ENCODE measurements at regions of chr5 and their contacts with region 1.

Region 1: GRCh38 chr5:124453221-124454051 is 293.0 kb downstream of the ZNF608 start:
- DNase-seq: peak; percentile 83
- ATAC-seq: peak; percentile 98
- H3K4me3 ChIP-seq: no peak overlapping the region
- H3K27ac ChIP-seq: peak overlapping the region; percentile 40; the same call in 1 of the 2 replicates
- H3K4me1 ChIP-seq: peaks cover 19% of the 10 kb centered on the region
- H3K27me3 ChIP-seq: no peaks in the 10 kb centered on the region
- CTCF ChIP-seq: no peak
- EP300 ChIP-seq: no peak
- POLR2A ChIP-seq: no peak
- RAD21 ChIP-seq: no peak

Region 2: GRCh38 chr5:124524552-124525232 is 71.3 kb after region 1 on chr5:
- CTCF ChIA-PET with region 1: interaction called, 3 read pairs
- POLR2A ChIA-PET with region 1: no interaction called
- RAD21 ChIA-PET with region 1: no interaction called
- SMC1A ChIA-PET with region 1: no interaction called
- in situ Hi-C with region 1: no loop called
- intact Hi-C with region 1: loop called (anchors 5 kb)
- DNase-seq: peak; percentile 35
- ATAC-seq: peak; percentile 86
- H3K4me3 ChIP-seq: no peak overlapping the region
- H3K27ac ChIP-seq: no peak overlapping the region
- H3K4me1 ChIP-seq: peaks cover 20% of the 10 kb centered on the region
- H3K27me3 ChIP-seq: 0 out of 4 replicates have a peak, but pooled peaks cover 0 to 3% of the 10 kb centered on the region in 2 experiments
- CTCF ChIP-seq: peak; percentile 26 to 50 (median 30); a peak in 5 of 6 replicates
- EP300 ChIP-seq: no peak
- POLR2A ChIP-seq: no peak
- RAD21 ChIP-seq: peak; percentile 67

Region 3: GRCh38 chr5:124725040-124725434 is 271.6 kb after region 1 on chr5:
- CTCF ChIA-PET with region 1: no interaction called
- POLR2A ChIA-PET with region 1: no interaction called
- RAD21 ChIA-PET with region 1: no interaction called
- SMC1A ChIA-PET with region 1: no interaction called
- in situ Hi-C with region 1: no loop called
- intact Hi-C with region 1: loop called (anchors 5 kb)
- DNase-seq: no peak
- ATAC-seq: peak; percentile 78
- H3K4me3 ChIP-seq: peak overlapping the region; percentile 46; the same call in 1 of the 2 replicates
- H3K27ac ChIP-seq: peak overlapping the region; percentile 73
- H3K4me1 ChIP-seq: peaks cover 12% of the 10 kb centered on the region
- H3K27me3 ChIP-seq: no peaks in the 10 kb centered on the region
- CTCF ChIP-seq: peak; percentile 32 to 44 (median 33); a peak in 5 of 6 replicates
- EP300 ChIP-seq: no peak
- POLR2A ChIP-seq: no peak
- RAD21 ChIP-seq: peak; percentile 43

Region 4: GRCh38 chr5:124902097-124902821 is 448.8 kb after region 1 on chr5:
- CTCF ChIA-PET with region 1: no interaction called
- POLR2A ChIA-PET with region 1: no interaction called
- RAD21 ChIA-PET with region 1: no interaction called
- SMC1A ChIA-PET with region 1: no interaction called
- in situ Hi-C with region 1: no loop called
- intact Hi-C with region 1: loop called (anchors 10 kb)
- DNase-seq: peak; percentile 92
- ATAC-seq: peak; percentile 99
- H3K4me3 ChIP-seq: 0 out of 2 replicates have a peak overlapping the region, but pooled peaks have one; percentile 15
- H3K27ac ChIP-seq: peak overlapping the region; percentile 59
- H3K4me1 ChIP-seq: peaks cover 17% of the 10 kb centered on the region
- H3K27me3 ChIP-seq: no peaks in the 10 kb centered on the region
- CTCF ChIP-seq: no peak
- EP300 ChIP-seq: peak; percentile 77 to 90; a peak in 3 of 4 replicates
- POLR2A ChIP-seq: 0 out of 2 replicates have a peak, but pooled peaks have one; percentile 33
- RAD21 ChIP-seq: peak; percentile 33; the same call in 1 of the 2 replicates